Esophagus muscularis mucosa (tissue), 4 donors: ENCODE measurements at regions of chr6 and their contacts with region 1.

Region 1: GRCh38 chr6:113909234-113909856 is 52.2 kb downstream of the MARCKS start:
- DNase-seq: no peak
- H3K4me3 ChIP-seq: no peak overlapping the region
- H3K27ac ChIP-seq: no peak overlapping the region
- H3K4me1 ChIP-seq: peaks cover 1 to 9% (median 6%) of the 10 kb centered on the region in 4 donors
- H3K27me3 ChIP-seq: no peaks in the 10 kb centered on the region
- CTCF ChIP-seq: peak; percentile 59 to 71 (median 70)
- EP300 ChIP-seq: no peak
- POLR2A ChIP-seq: no peak

Region 2: DNA sequence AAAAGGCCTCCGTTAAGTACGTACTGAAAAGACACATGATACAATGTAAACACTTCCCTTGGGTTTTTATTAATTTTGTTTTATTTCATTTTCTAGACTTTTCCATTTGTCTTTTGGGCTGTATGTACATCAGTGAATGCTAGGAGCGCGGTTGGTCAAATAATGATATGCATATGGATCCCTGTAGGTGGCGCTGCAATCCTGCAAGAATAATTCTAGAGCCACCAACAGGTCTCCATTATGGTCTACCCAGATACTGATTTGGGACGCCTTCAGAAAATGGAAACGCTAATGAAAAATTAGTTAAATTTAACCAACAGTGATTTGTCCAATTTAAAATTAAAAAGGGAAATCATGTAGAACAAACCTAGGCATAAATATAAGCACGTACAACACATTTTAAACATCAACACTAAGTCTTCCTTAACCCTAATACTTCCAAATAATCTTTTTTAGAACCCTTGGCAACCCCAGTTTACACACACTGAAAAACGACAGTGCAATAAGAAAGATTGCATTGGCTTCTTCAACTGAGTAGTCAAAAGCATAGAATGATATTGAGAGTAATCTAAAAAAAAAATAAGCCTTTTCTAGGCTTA is 1128.7 kb before region 1 on chr6:
- intact Hi-C with region 1: loop called (anchors 10 kb)
- DNase-seq: no peak
- H3K4me3 ChIP-seq: no peak overlapping the region
- H3K27ac ChIP-seq: no peak overlapping the region
- H3K4me1 ChIP-seq: no peaks in the 10 kb centered on the region
- H3K27me3 ChIP-seq: no peaks in the 10 kb centered on the region
- CTCF ChIP-seq: peak; percentile 81 to 84 (median 83)
- EP300 ChIP-seq: no peak
- POLR2A ChIP-seq: no peak

Region 3: DNA sequence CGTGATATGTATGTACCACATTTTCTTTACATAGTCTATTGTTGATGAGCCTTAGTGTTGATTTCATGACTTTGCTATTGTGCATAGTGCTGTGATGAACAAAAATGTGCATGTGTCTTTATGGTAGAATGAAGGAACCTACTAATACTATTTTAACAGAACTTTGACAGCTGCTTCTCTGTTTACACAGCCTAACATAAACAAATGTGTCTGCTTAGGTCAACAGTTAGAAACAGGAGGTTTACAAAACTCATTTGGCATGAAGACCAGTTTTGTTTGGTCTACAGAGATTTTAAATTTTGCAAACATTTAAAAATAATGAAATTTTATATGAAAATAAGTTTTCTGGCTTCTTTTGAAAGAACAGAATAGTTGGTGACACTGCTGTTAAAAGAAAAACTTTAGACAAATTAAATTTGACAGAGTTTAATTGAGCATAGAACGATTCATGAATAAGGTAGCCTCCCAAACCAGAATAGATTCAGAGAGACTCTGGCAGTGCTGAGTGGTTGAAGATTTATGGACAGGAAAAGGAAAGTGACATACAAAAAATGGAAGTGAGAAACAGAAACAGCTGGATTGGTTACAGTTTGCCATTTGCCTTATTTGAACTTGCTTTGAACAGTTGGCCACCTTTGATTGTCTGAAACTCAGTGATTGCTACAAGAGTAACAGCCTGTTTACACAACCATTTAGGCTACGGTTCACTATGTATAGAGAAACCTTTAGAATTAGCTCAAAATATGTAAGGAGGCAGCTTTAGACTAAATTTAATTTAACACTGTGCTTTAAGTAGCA is 1149.3 kb after region 1 on chr6:
- intact Hi-C with region 1: no loop called
- DNase-seq: no peak
- H3K4me3 ChIP-seq: no peak overlapping the region
- H3K27ac ChIP-seq: no peak overlapping the region
- H3K4me1 ChIP-seq: no peaks in the 10 kb centered on the region
- H3K27me3 ChIP-seq: no peaks in the 10 kb centered on the region
- CTCF ChIP-seq: no peak
- EP300 ChIP-seq: no peak
- POLR2A ChIP-seq: no peak